ENCODE measurements at regions of chr16 and their contacts with region 1.

Region 1: GRCh38 chr16:7055443-7055842 is 277.2 kb upstream of the RBFOX1 start:
- DNase-seq: no peak
- H3K4me3 ChIP-seq: no peak overlapping the region
- CTCF ChIP-seq: no peak

Region 2: DNA sequence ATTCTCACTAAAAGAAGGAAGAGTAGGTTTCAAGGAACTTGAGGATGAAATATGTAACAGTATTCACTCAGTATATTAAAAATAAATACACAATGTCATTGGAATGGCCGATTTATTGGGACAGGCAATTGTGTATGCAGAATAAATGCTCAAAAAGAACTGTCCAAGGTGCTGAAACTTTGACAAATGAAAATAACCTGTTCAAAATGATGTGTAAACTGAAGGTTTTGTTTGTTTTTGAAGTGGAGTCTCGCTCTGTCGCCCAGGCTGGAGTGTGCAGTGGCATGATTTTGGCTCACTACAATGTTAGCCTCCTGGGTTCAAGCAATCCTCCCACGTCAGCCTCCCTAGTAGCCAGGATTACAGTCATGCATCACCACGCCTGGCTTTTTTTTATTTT is 41.5 kb before region 1 on chr16:
- in situ Hi-C with region 1: no loop called
- DNase-seq: no peak
- H3K4me3 ChIP-seq: no peak overlapping the region
- CTCF ChIP-seq: no peak

Region 3: DNA sequence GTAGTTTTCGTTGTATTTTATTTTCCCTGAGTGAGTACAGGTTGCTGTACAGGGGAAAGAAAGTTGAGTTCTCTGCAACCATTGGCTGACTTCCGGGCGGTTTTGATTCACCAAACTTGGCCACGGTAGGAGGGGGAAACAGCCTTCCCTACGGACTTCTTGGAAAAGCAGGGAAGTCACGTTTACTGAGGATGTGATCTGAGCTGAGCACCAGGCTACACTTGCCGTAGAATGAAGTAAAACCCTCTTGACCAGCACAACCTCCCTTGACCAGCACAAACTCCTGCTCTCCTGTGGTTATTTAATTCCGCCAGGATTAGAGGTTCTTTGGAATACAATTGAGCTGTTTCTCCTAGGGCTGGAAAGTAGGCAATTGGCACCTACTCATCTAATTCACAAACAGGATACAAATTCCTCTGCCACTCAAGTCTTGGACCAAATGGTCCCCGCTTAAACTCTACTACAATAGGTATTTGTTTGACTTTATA is 35.2 kb after region 1 on chr16:
- in situ Hi-C with region 1: loop called (anchors 5 kb)
- DNase-seq: no peak
- H3K4me3 ChIP-seq: no peak overlapping the region
- CTCF ChIP-seq: no peak

Region 4: GRCh38 chr16:7161891-7162290 is 106.4 kb after region 1 on chr16:
- in situ Hi-C with region 1: loop called (anchors 5 kb)
- DNase-seq: no peak
- H3K4me3 ChIP-seq: no peak overlapping the region
- CTCF ChIP-seq: no peak

Region 5: GRCh38 chr16:7246578-7246977 is 191.1 kb after region 1 on chr16:
- in situ Hi-C with region 1: no loop called
- DNase-seq: no peak
- H3K4me3 ChIP-seq: no peak overlapping the region
- CTCF ChIP-seq: no peak